Activated naive CD4-positive, alpha-beta T cell treated with anti-CD3 and anti-CD28 coated beads for 36 hours (primary cell): ENCODE measurements at regions of chr9 and their contacts with region 1.

Region 1: DNA sequence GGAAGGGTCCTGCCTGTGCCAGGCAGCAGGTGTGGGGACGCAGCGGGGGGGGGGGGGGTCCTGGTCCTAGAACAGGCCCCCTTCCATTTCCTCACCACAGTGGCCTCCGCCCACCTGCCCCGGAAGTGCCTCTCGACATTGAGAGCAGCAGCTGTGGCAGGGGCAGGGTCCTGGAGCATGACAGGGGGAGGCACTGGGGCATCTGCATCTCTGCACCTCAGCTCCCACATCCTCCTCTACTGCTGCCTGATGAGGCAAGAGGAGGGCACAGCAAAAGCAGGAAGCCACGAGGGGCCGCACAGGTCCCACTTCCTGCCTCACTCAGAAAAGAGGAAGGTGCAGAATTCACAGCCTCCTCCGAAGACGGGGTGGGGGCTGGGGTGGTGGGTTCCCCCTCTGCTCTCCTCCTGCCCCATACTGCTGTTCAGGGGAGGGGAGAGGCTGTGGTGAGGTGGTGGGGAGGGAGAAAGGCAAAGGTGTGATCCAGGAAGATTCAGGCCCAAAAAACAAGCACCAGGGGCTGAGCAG is 14.8 kb downstream of the AKNA start:
- DNase-seq: peak; percentile 93
- H3K4me3 Mint-ChIP-seq: peak overlapping the region; percentile 67
- H3K27ac Mint-ChIP-seq: peak overlapping the region; percentile 95
- H3K4me1 Mint-ChIP-seq: peaks cover 81% of the 10 kb centered on the region
- H3K27me3 Mint-ChIP-seq: no peaks in the 10 kb centered on the region

Region 2: GRCh38 chr9:114339130-114339908 is 33.7 kb before region 1 on chr9:
- CTCF ChIA-PET with region 1: no interaction called
- intact Hi-C with region 1: loop called (anchors 5 kb)
- DNase-seq: peak; percentile 66
- H3K4me3 Mint-ChIP-seq: no peak overlapping the region
- H3K27ac Mint-ChIP-seq: peak overlapping the region; percentile 66
- H3K4me1 Mint-ChIP-seq: peaks cover 15% of the 10 kb centered on the region
- H3K27me3 Mint-ChIP-seq: no peaks in the 10 kb centered on the region